Activated CD4-positive, alpha-beta memory T cell treated with anti-CD3 and anti-CD28 coated beads for 36 hours (primary cell): ENCODE measurements at regions of chr15 and their contacts with region 1.

Region 1: GRCh38 chr15:38724827-38725226 is 160.2 kb upstream of the RASGRP1 start:
- DNase-seq: no peak
- H3K4me3 Mint-ChIP-seq: no peak overlapping the region
- H3K27ac Mint-ChIP-seq: no peak overlapping the region
- H3K4me1 Mint-ChIP-seq: no peaks in the 10 kb centered on the region
- H3K27me3 Mint-ChIP-seq: peaks cover 2% of the 10 kb centered on the region

Region 2: DNA sequence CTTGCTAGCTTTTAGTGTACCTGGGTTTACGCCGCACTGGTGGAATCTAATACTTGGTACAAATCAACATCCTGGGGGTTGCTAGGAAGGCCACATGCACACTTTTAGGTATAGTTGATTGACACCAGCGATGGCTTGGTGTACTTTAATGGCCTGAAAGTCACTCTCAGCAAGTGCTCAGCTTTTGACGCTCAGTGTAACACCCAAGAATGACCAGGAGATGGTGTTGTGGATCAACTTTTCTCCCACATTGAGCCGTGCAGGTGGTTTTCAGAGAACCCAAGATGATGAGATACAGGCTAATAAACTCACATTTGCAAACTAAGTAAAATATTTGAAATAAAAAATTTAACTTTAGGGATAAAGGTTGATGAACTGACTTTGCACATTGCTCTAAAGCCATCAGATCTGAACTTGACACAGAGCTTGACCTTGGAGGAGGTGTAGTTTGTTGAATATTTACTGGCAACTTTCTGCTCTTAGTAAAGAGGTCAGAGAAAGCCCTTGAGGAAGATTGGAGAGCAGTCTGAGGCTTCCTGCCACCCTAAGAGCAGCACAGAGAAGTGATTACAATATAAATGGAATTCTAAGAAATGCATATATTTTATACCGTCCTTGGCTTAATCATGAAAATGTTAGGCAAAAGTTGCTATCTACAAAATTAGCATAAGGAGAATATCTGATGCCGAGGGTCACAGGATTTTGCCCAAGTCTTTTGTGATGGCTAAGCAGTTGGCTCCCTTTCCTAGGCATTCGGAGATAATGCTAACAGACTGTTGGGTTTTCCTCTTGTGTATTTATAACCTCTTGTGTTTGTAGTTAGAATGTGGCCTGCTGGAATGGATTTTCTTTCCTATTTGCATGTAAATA is 16.8 kb before region 1 on chr15:
- CTCF ChIA-PET with region 1: interaction called, 11 read pairs
- POLR2A ChIA-PET with region 1: no interaction called
- intact Hi-C with region 1: no loop called
- DNase-seq: peak; percentile 46
- H3K4me3 Mint-ChIP-seq: no peak overlapping the region
- H3K27ac Mint-ChIP-seq: no peak overlapping the region
- H3K4me1 Mint-ChIP-seq: peaks cover 7% of the 10 kb centered on the region
- H3K27me3 Mint-ChIP-seq: no peaks in the 10 kb centered on the region